ENCODE measurements at regions of chr7 and their contacts with region 1.

Region 1: DNA sequence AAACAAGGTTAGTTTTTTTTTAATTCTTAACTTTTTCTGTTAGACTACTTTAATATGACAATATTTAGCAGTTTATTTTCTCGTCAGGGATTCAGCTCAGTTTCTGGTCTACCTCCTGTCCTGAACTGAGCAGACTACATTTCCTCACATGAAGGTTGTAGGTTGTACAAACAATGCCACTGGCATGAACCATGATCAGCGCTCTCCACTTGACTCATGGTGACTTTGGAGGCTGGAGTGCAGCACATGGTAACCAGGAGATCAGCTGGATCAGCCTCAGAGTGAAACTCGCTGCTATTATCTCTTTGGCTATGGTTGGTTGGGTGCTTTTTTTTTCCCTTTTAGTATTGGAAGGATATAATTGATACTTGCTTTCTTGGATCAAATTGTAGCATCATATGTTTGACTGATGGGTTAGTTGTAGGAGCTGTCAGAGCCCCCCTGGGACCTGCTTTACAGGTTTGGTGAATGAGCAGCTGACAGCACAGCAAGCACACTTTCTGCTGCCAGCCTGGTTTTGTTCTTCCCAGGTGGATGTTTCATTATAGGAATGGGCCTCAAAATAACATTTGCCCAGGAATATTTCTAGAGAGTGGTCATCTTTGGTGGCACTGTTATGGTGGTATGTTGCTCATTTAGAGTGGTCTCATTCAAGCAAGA is 556.4 kb downstream of the AUTS2 start:
- DNase-seq: no peak
- ATAC-seq: no peak
- H3K4me3 ChIP-seq: no peak overlapping the region
- H3K27ac ChIP-seq: no peak overlapping the region
- H3K4me1 ChIP-seq: no peaks in the 10 kb centered on the region
- H3K27me3 ChIP-seq: no peaks in the 10 kb centered on the region

Region 2: DNA sequence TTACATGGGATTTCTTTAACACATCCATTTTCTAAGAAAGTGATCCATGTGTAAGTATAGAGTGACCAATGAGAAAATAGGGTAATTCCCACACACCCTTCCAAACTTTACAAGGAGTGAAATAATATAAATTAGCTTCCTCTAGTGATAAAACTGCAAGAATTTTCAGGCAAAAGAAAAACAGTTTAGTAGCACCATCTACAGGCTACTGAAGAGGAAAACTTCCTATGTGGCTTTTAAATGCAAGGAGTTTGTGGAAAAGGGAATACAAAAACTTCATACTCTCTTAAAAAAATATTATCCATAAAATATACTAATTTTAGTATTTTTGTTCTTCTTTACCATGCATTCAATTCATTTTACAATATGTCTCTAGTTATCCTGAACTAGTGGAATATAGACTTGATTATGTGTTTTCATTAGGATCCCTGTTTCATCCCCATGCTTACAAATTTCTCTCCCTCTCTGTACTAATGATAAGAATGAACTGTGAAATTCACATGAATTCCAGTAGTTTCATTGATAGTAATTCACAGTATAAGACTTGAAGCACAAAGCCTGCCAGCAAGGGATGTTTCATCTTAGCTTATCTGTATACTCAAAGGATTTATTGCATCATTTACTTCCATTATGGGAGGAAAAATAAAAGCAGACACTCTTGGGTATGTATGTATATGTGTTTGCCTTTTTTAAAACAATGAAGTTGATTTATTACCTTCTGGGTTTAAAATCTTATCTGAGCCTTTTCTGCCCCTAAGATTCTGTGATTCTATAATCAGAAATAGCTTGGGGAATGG is 113.5 kb before region 1 on chr7:
- intact Hi-C with region 1: loop called in 1 of 4 experiments (anchors 10 kb)
- DNase-seq: no peak
- ATAC-seq: no peak
- H3K4me3 ChIP-seq: no peak overlapping the region
- H3K27ac ChIP-seq: no peak overlapping the region
- H3K4me1 ChIP-seq: no peaks in the 10 kb centered on the region
- H3K27me3 ChIP-seq: no peaks in the 10 kb centered on the region

Measured in right cardiac atrium (tissue), 5 donors.